Right ventricle myocardium inferior (tissue), 1 donor: ENCODE measurements at regions of chr2 and their contacts with region 1.

Region 1: DNA sequence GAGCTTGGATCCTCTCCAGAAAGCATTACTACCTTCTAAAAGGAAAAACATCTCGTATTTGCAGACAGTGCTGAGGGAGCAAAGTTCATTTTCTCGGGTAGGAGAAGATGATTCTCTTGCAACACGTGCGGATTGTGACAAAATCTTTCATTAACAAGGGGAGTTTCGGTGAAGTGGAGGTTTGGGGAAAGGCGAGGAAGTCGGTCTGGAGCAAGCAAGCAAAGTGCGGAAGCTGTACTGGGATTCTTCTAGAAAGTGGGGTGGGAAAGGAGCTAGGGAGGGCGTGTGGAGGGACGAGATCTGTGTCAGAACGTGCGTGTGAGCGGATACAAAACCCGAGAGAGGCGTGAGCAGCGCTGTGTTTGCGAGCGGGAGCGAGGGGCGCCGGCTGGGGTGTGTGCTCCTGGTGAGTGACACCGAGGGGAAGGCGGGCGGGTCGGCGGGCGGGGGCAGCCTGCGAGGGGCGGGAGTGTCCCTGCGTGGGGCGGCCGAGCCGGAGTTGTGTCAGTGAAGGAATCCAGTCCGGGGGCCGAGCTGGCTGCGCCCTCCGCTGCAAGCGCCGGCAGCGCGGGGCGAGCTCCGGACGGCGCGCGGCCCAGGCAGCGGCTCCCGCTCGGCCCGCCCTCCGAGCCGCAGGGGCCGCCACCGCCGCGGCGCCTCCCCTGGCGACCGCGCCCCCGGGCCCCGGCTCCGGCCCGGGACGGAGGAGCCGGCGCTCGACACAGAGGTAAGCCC is at the start of gene SPATS2L:
- DNase-seq: peak; percentile 89
- ATAC-seq: peak; percentile 88
- total RNA-seq, gene SPATS2L: 89.5 TPM

Region 2: GRCh38 chr2:199985625-199986207 is 320.6 kb before region 1 on chr2:
- intact Hi-C with region 1: loop called (anchors 2 kb)
- DNase-seq: no peak
- ATAC-seq: peak; percentile 84

Region 3: GRCh38 chr2:200225951-200226350 is 80.4 kb before region 1 on chr2:
- intact Hi-C with region 1: loop called (anchors 5 kb)
- DNase-seq: no peak
- ATAC-seq: peak; percentile 58

Region 4: DNA sequence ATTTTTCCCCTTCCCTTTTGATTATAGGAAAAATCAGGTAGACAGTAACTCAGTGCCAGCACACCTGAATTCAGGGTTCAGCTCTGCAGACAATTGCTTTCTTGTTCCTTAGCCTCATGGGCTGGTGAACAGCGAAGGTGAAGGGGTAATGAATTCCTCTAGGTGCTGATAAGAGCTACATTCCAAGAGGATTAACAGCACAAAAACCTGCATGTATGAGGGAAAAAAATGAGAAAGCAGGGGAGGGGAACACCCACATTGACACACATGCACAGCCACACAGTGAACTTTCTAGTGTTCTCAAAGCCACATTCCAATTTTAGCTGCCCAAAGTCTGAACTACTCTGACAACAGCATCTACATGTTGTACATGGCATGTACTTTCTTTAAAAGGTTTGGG is 46.3 kb after region 1 on chr2:
- intact Hi-C with region 1: loop called (anchors 5 kb)
- DNase-seq: no peak
- ATAC-seq: no peak

Region 5: GRCh38 chr2:200376513-200377354 is 70.4 kb after region 1 on chr2:
- intact Hi-C with region 1: loop called (anchors 5 kb)
- DNase-seq: no peak
- ATAC-seq: peak; percentile 34

Region 6: GRCh38 chr2:200405599-200406298 is 99.4 kb after region 1 on chr2:
- intact Hi-C with region 1: loop called (anchors 5 kb)
- DNase-seq: no peak
- ATAC-seq: peak; percentile 67

Region 7: GRCh38 chr2:200447139-200447855 is 140.9 kb after region 1 on chr2:
- intact Hi-C with region 1: no loop called
- DNase-seq: no peak
- ATAC-seq: no peak

Region 8: GRCh38 chr2:200483729-200484198 is 177.4 kb after region 1 on chr2:
- intact Hi-C with region 1: loop called (anchors 5 kb)
- DNase-seq: no peak
- ATAC-seq: no peak